ENCODE measurements at regions of chr4 and their contacts with region 1.

Region 1: DNA sequence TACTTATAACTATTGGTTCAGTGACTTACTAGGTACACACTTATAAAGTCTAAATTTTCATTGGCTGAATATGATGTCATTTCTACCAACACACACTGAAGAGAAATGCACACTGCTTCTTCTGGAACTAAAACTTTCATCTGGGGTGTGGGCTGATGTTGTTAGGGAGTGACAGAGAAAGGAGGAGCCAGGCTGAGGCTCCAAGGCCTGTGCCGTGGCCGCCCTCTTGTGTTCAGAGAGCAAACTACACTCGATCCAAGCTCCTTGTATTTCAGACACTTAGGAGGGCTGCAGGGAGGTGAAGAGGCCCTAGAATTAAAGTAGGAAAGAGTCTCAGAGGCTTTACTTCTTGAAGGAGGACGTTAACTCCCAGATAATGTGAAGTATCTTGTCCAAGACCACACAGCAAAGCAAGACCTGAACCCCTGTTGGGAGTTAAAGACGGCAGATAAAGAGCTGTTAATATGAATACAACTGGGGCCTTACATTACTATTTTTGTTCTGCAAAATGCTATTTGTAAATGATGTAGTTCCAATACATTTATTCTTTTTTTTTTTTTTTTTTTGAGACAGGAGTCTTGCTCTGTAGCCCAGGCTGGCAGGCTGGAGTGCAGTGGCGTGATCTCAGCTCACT is 137.5 kb downstream of the AFAP1 start:
- DNase-seq: peak; percentile 96
- H3K4me3 ChIP-seq: no peak overlapping the region
- H3K27ac ChIP-seq: peak overlapping the region in 2 of 4 donors; percentile 35 to 42
- H3K4me1 ChIP-seq: peaks cover 30 to 49% (median 45%) of the 10 kb centered on the region in 4 donors
- H3K27me3 ChIP-seq: no peaks in the 10 kb centered on the region
- CTCF ChIP-seq: peak; percentile 91 to 96 (median 95)
- EP300 ChIP-seq: no peak
- POLR2A ChIP-seq: no peak

Region 2: DNA sequence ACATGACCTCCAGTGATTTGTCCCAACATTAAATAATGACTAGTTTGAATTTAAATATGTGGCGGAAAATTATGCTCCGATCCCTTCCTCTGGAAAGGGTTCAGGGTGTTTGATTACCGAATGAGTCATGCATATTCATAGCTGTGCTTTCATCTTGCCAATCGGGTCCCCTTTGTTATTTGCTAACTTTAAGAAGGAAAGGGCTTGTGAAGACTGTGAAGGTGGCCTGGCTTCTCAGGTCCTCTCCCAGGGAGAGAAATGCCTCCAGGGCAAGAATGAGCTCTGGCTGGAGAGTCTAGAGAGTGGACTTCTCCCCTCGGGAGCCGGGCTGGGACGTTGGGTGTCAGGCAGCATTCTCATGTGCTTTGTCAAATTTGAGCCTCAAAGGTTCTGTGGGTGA is 212.0 kb before region 1 on chr4:
- intact Hi-C with region 1: no loop called
- DNase-seq: no peak
- H3K4me3 ChIP-seq: no peak overlapping the region
- H3K27ac ChIP-seq: no peak overlapping the region
- H3K4me1 ChIP-seq: no peaks in the 10 kb centered on the region
- H3K27me3 ChIP-seq: no peaks in the 10 kb centered on the region
- CTCF ChIP-seq: no peak
- EP300 ChIP-seq: no peak
- POLR2A ChIP-seq: no peak

Region 3: DNA sequence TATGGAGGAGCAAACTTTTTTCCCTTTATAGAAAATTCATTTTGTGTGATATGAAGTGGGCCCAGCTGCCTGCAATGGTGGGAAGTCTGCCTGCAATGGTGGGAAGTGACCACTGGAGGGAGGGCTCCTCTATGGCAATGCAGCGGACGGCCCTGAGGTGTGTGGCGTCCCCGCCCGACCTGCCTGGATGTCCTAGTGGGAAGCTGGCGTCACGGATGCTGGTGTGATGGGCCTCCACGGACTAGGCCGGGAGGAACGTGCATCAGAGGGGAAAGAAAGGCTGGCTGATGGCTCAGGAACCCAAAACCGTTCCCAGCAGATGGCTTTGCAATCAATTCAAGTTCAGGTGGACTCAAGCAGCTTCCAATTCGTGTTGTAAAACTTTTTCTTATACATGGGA is 40.5 kb before region 1 on chr4:
- intact Hi-C with region 1: loop called (anchors 2 kb)
- DNase-seq: peak; percentile 94
- H3K4me3 ChIP-seq: no peak overlapping the region
- H3K27ac ChIP-seq: peak overlapping the region; percentile 66 to 79 (median 72)
- H3K4me1 ChIP-seq: peaks cover 11 to 50% (median 40%) of the 10 kb centered on the region in 4 donors
- H3K27me3 ChIP-seq: no peaks in the 10 kb centered on the region
- CTCF ChIP-seq: peak; percentile 85 to 95 (median 90)
- EP300 ChIP-seq: no peak
- POLR2A ChIP-seq: no peak

Region 4: GRCh38 chr4:7770224-7771050 is 31.8 kb before region 1 on chr4:
- intact Hi-C with region 1: loop called (anchors 2 kb)
- DNase-seq: no peak
- H3K4me3 ChIP-seq: no peak overlapping the region
- H3K27ac ChIP-seq: peak overlapping the region in 3 of 4 donors; percentile 35 to 55 (median 40)
- H3K4me1 ChIP-seq: peaks cover 16 to 75% (median 60%) of the 10 kb centered on the region in 4 donors
- H3K27me3 ChIP-seq: no peaks in the 10 kb centered on the region
- CTCF ChIP-seq: peak; percentile 34 to 47 (median 42)
- EP300 ChIP-seq: no peak
- POLR2A ChIP-seq: no peak

Region 5: DNA sequence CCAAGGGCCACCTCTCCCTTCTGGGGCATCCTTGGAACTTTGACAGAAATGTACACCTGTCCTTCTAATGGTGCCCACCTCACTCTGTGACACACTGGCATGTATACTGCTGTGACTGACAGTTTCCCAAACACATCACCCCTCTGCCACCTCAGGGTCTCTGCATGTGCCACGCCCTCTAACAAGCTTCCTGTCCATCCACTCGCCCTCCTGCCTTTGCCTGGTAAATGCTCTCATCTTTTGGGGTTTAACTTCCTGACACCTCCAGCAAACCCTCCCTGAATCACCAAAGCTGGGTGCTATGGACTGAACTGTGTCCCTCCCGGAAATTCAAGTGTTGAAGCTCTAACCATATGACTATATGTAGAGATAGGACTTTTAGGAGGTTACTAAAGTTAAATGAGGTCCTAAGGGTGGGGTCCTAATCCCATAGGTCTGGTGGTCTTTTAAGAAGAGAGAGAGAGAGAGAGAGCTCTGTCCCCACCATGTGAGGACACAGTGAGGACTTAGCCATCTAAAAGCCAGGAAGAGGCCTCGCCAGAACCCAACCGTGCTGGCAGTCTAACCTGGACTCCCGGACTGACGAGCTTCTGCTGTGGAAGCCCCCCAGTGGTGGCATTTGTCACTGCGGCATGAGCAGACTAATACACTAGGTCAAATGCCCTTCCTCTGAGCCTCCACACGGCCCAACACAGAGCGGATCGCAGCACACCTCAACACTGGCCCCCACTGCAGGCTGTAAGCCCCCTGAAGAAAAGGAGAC is 41.8 kb after region 1 on chr4:
- intact Hi-C with region 1: loop called (anchors 2 kb)
- DNase-seq: no peak
- H3K4me3 ChIP-seq: no peak overlapping the region
- H3K27ac ChIP-seq: peak overlapping the region; percentile 91 to 93 (median 92)
- H3K4me1 ChIP-seq: peaks cover 15 to 69% (median 62%) of the 10 kb centered on the region in 4 donors
- H3K27me3 ChIP-seq: no peaks in the 10 kb centered on the region
- CTCF ChIP-seq: peak; percentile 46 to 60 (median 53)
- EP300 ChIP-seq: no peak
- POLR2A ChIP-seq: no peak

Region 6: DNA sequence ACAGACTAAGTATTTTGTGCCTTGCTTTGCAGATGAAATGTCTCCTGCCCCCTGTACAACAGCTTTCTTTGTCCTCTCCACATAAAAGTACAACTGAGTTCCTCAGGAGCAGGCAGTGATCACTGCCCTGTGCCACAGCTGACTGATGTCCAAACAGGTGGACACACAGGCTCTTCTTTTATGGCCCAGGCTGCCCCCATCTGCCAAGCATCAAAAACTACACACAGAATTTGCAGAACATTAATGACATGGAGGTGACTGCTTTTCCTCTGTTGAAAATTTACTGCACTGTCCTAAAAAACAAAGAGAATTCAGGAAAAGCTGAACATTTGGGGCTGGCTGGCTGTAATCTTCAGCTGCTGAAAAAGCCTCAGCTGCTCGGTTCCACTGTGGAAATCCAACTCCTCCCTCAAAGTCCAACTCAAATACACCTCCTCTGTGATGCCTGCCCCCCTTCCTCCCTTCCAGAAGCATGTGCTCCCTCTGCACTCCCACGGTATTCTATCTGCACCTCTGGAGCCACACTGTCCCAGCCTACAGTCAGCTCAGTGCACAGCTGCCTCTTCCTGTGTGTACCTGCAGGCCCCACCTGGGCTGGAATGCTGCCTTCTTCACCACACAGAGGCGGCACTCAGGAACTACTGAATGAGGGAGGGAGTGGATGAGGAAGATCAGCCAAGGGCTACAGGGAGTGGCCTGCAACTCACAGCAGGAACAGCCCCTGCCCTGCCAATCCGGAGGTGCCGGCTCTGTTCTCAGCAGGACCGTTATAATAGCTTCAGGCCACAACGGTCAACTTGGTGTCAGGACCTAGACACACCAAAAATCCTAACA is 127.1 kb after region 1 on chr4:
- intact Hi-C with region 1: loop called (anchors 2 kb)
- DNase-seq: peak; percentile 91
- H3K4me3 ChIP-seq: no peak overlapping the region
- H3K27ac ChIP-seq: peak overlapping the region; percentile 11 to 59 (median 50)
- H3K4me1 ChIP-seq: peaks cover 10 to 80% (median 57%) of the 10 kb centered on the region in 4 donors
- H3K27me3 ChIP-seq: no peaks in the 10 kb centered on the region
- CTCF ChIP-seq: peak; percentile 44 to 55 (median 45)
- EP300 ChIP-seq: no peak
- POLR2A ChIP-seq: no peak

Region 7: GRCh38 chr4:7939377-7940108 is 137.3 kb after region 1 on chr4 and contains the start of gene AFAP1:
- intact Hi-C with region 1: loop called (anchors 2 kb)
- DNase-seq: no peak
- H3K4me3 ChIP-seq: peak within 1 kb of the TSS; percentile 94 to 99 (median 98)
- H3K27ac ChIP-seq: peak within 1 kb of the TSS; percentile 99
- H3K4me1 ChIP-seq: peaks cover 9 to 58% (median 45%) of the 10 kb centered on the region in 4 donors
- H3K27me3 ChIP-seq: no peaks in the 10 kb centered on the region
- CTCF ChIP-seq: no peak
- EP300 ChIP-seq: no peak
- POLR2A ChIP-seq: peak; percentile 46
- total RNA-seq, gene AFAP1: 37.8 to 71.3 (median 50.9) TPM

Region 8: GRCh38 chr4:7987148-7987989 is 185.2 kb after region 1 on chr4:
- intact Hi-C with region 1: loop called (anchors 2 kb)
- DNase-seq: peak; percentile 95
- H3K4me3 ChIP-seq: no peak overlapping the region
- H3K27ac ChIP-seq: no peak overlapping the region
- H3K4me1 ChIP-seq: peaks cover 6 to 18% (median 14%) of the 10 kb centered on the region in 4 donors
- H3K27me3 ChIP-seq: no peaks in the 10 kb centered on the region
- CTCF ChIP-seq: peak; percentile 87 to 92 (median 92)
- EP300 ChIP-seq: no peak
- POLR2A ChIP-seq: no peak

Measured in esophagus muscularis mucosa (tissue), 4 donors.